ENCODE measurements at regions of chr4 and their contacts with region 1.

Region 1: GRCh38 chr4:1011022-1011694 is at the start of gene FGFRL1:
- DNase-seq: peak; percentile 97
- ATAC-seq: peak; percentile 59
- H3K4me3 Mint-ChIP-seq: peak within 1 kb of the TSS; percentile 75
- H3K27ac Mint-ChIP-seq: peak within 1 kb of the TSS; percentile 80
- H3K4me1 Mint-ChIP-seq: peaks cover 9% of the 10 kb centered on the region
- H3K27me3 Mint-ChIP-seq: peaks cover 26% of the 10 kb centered on the region
- total RNA-seq, gene FGFRL1: 17.6 to 23.5 TPM

Region 2: GRCh38 chr4:705278-706082 is 305.7 kb before region 1 on chr4 and contains the start of gene PCGF3:
- CTCF ChIA-PET with region 1: no interaction called
- POLR2A ChIA-PET with region 1: no interaction called
- intact Hi-C with region 1: loop called in 1 of 2 experiments (anchors 1 kb)
- DNase-seq: peak; percentile 99
- ATAC-seq: peak; percentile 99
- H3K4me3 Mint-ChIP-seq: peak within 1 kb of the TSS; percentile 68
- H3K27ac Mint-ChIP-seq: no peak within 1 kb of the TSS
- H3K4me1 Mint-ChIP-seq: peaks cover 15% of the 10 kb centered on the region
- H3K27me3 Mint-ChIP-seq: no peaks in the 10 kb centered on the region
- total RNA-seq, gene PCGF3: 20.6 to 22.5 TPM

Region 3: DNA sequence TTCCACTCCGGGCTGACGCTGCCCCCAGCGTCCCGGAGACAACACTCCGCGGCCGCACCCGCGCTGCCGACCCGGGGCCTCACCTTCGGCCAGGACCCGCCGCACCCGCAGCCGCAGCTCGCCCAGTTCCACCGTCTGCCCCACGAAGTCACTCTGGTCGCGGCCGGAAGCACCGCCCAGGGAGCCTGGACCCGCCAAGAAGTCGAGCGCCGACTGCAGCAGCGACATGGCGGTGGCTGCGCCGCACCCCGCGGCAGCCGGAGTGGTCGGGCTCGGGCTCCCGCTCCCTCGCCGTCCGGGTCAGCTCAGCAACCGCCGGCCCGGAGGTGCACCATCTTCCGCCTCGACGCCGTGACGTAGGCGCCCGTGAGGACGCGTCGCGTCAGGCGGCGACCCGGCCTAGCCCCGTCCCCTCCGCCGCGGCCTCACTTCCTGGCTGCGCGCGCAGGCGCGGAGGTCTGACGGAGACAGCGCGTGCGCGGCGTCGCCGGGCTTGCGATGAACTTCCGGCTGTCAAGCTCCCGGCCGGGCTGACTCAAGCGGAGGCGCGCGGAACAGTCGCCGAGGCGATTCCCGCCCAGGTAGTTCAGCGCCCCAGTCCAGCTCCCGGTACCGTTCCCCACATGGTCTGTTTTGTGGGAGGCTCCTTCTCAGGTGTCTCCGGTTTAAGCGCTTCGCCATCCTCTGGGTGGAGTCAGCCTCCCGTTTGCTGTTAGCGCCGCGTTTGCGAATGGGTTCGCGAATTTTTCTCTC is 79.0 kb before region 1 on chr4 and contains the starts of genes GAK and TMEM175:
- CTCF ChIA-PET with region 1: no interaction called
- POLR2A ChIA-PET with region 1: no interaction called
- intact Hi-C with region 1: loop called in 1 of 2 experiments (anchors 1 kb)
- DNase-seq: peak; percentile 98
- ATAC-seq: peak; percentile 95
- H3K4me3 Mint-ChIP-seq: peak within 1 kb of the TSS; percentile 87
- H3K27ac Mint-ChIP-seq: peak within 1 kb of the TSS; percentile 89
- H3K4me1 Mint-ChIP-seq: peaks cover 29% of the 10 kb centered on the region
- H3K27me3 Mint-ChIP-seq: no peaks in the 10 kb centered on the region
- total RNA-seq, gene GAK: 82.9 to 88.0 TPM
- total RNA-seq, gene TMEM175: 15.2 to 17.3 TPM

Region 4: DNA sequence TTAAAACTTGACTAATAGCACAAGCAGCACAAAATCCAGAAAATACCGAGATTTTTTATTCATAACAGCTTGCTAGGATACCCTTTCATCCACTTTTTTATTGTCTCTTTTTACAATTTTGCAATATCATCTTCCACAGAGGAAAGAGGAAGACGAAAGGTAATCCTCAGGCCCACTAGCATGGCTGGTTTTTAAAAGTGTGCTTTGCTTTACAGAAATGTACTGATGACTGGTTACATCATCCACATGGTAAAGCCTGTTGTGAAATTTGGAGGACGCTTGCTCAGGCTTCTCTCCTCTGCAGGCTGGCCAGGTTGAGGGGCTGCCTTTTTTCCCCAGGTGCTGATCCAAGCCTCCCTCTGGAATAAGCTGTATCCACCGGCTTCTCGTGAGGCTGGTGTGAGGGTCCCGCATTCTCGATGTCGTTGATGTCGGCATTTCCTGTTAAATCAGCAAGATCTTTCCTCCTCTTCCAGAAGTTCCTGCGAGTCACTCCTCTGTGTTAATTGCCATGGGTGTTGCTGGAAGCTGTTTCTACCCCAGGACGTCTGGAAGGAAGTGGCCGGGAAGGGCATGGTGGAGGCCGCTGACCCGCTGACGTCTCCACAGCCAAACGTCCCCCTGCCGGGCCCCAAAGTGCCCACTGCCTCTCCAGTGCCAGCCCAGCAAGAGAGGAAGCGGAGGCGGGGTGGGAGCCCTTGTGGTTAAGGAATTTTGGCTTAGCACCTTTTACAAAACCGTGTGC is 32.0 kb before region 1 on chr4:
- CTCF ChIA-PET with region 1: no interaction called
- POLR2A ChIA-PET with region 1: no interaction called
- intact Hi-C with region 1: no loop called
- DNase-seq: no peak
- ATAC-seq: no peak
- H3K4me3 Mint-ChIP-seq: no peak overlapping the region
- H3K27ac Mint-ChIP-seq: no peak overlapping the region
- H3K4me1 Mint-ChIP-seq: no peaks in the 10 kb centered on the region
- H3K27me3 Mint-ChIP-seq: no peaks in the 10 kb centered on the region

Region 5: GRCh38 chr4:1026115-1026514 is 15.0 kb after region 1 on chr4:
- CTCF ChIA-PET with region 1: no interaction called
- POLR2A ChIA-PET with region 1: no interaction called
- intact Hi-C with region 1: loop called in 1 of 2 experiments (anchors 1 kb)
- DNase-seq: peak; percentile 79
- ATAC-seq: peak; percentile 95
- H3K4me3 Mint-ChIP-seq: no peak overlapping the region
- H3K27ac Mint-ChIP-seq: no peak overlapping the region
- H3K4me1 Mint-ChIP-seq: peaks cover 5% of the 10 kb centered on the region
- H3K27me3 Mint-ChIP-seq: no peaks in the 10 kb centered on the region

Region 6: DNA sequence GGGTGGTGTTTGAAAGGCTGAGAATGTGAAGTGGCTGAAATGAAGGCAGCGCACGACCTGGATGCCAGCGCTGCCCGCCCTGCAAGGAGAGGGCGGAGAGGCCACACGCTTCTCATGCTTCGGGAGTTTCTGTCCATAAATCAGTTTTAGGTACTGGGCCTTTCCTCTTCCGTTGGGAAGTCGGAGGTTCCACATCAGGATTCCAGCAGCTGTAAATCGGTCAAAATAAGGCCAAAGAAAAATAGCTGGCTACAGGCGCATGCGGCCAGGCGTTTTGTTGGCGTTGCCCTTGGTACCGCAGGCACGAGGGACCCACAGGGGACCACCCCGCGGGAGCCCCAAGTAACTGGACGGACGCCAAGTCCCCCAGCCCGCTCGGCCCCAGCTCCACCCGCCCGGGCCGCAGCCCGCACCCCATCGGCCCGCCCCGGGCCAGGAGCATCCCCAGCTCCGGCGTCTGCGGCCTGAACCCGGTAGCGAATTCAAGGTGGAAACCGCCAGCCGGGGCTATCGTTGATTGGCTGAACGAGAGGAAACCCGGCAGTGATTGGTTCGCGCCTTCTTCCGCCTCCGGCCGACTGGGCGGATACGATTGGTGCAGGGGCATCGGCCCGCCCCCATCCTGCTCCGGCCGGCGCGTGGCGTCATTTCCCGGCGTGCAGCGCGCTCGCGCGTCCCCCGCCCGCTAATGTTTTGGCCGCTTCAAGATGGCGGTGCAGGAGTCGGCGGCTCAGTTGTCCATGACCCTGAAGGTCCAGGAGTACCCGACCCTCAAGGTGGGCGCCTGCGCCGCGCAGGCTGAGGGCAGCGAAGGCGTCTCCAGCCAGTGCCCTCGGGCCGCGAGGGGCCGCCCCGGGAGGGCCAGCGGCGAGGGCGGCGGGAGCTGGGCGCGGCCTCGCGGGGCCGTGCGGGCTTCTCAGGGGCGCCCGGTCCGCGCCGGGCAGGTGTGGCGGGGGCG is 278.3 kb after region 1 on chr4 and contains the start of gene MAEA:
- CTCF ChIA-PET with region 1: no interaction called
- POLR2A ChIA-PET with region 1: no interaction called
- intact Hi-C with region 1: loop called in 1 of 2 experiments (anchors 1 kb)
- DNase-seq: peak; percentile 99
- ATAC-seq: peak; percentile 98
- H3K4me3 Mint-ChIP-seq: peak within 1 kb of the TSS; percentile 95
- H3K27ac Mint-ChIP-seq: peak within 1 kb of the TSS; percentile 87
- H3K4me1 Mint-ChIP-seq: peaks cover 41% of the 10 kb centered on the region
- H3K27me3 Mint-ChIP-seq: no peaks in the 10 kb centered on the region
- total RNA-seq, gene MAEA: 38.9 to 40.4 TPM

Region 7: DNA sequence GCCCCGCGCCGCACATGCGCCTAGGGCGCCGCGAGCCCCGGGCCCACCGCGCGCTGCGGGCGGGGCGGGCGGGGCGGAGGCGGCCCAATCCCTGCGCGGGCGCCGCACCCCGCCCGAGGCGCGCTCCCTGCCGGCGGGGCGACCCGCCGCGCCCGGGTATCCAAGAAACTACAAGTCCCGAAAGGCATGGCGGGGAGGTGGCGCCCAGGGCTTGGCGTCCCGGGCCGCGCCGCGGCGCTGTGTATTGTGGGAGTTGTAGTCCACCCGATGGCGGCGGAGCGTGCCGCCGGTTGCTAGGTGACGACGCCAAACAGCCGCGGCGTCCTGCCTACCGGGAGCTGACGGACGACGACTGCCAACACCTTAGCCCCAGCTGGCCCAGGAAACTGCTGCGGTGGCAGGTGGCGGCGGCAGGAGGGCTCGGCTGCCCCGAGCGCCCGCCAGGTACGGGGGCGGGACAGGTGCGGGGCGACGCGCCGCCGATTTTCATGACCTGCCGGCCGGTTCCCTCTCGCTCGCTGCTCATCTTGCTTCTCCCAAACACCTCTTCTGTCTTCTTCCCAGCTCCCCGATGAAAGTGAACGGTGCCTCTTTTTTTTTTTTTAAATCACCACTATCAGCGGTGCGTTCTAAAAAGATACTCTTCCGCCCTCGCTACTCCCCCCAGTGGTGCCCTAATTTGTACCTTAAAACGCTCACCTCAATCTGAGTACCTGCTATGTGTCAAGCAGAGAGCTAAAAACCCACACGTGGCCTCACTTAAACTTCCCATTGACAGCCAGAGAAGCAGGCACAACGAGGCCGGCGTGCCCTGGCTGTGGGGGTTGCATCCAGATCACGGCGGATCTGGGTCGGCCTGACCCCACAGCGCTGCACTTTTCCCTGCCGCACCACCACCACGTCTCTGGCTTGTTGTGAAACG is 1407.8 kb after region 1 on chr4 and contains the start of gene CFAP99:
- CTCF ChIA-PET with region 1: no interaction called
- POLR2A ChIA-PET with region 1: no interaction called
- intact Hi-C with region 1: loop called in 1 of 2 experiments (anchors 5 kb)
- DNase-seq: peak; percentile 99
- ATAC-seq: peak; percentile 93
- H3K4me3 Mint-ChIP-seq: peak within 1 kb of the TSS; percentile 82
- H3K27ac Mint-ChIP-seq: peak within 1 kb of the TSS; percentile 68
- H3K4me1 Mint-ChIP-seq: peaks cover 39% of the 10 kb centered on the region
- H3K27me3 Mint-ChIP-seq: peaks cover 27% of the 10 kb centered on the region
- total RNA-seq, gene CFAP99: 0.05 TPM in 1 of 2 experiments, not detected in the other